K562 (cell line): ENCODE measurements at regions of chr1 and their contacts with region 1.

Region 1: GRCh38 chr1:151773702-151774101 is 10.4 kb upstream of the MRPL9 start:
- DNase-seq: peak in 2 of 4 experiments; percentile 42 to 62
- ATAC-seq: peak; percentile 53; the same call in 2 of the 3 replicates
- H3K4me3 ChIP-seq: no peak overlapping the region
- H3K27ac ChIP-seq: peak overlapping the region; percentile 66; the same call in 2 of the 3 replicates
- H3K4me1 ChIP-seq: peaks cover 21 to 38% of the 10 kb centered on the region in 2 experiments
- H3K27me3 ChIP-seq: no peaks in the 10 kb centered on the region
- CTCF ChIP-seq: no peak
- EP300 ChIP-seq: no peak
- POLR2A ChIP-seq: no peak
- RAD21 ChIP-seq: no peak

Region 2: GRCh38 chr1:151762941-151763921 is 10.5 kb before region 1 on chr1 and contains the start of gene MRPL9:
- CTCF ChIA-PET with region 1: no interaction called
- POLR2A ChIA-PET with region 1: interaction called, 13 read pairs
- in situ Hi-C with region 1: no loop called
- intact Hi-C with region 1: no loop called
- DNase-seq: peak; percentile 88 to 92 (median 91)
- ATAC-seq: peak; percentile 99
- H3K4me3 ChIP-seq: peak within 1 kb of the TSS; percentile 95
- H3K27ac ChIP-seq: peak within 1 kb of the TSS; percentile 88
- H3K4me1 ChIP-seq: peaks cover 3 to 8% of the 10 kb centered on the region in 2 experiments; a peak in 2 of 5 replicates
- H3K27me3 ChIP-seq: no peaks in the 10 kb centered on the region
- CTCF ChIP-seq: no peak; a peak in 1 of 6 replicates
- EP300 ChIP-seq: no peak
- POLR2A ChIP-seq: peak; percentile 87
- RAD21 ChIP-seq: peak; percentile 17 to 36; a peak in 2 of 4 replicates
- polyA plus RNA-seq, gene MRPL9: 38.0 to 57.0 TPM

Region 3: DNA sequence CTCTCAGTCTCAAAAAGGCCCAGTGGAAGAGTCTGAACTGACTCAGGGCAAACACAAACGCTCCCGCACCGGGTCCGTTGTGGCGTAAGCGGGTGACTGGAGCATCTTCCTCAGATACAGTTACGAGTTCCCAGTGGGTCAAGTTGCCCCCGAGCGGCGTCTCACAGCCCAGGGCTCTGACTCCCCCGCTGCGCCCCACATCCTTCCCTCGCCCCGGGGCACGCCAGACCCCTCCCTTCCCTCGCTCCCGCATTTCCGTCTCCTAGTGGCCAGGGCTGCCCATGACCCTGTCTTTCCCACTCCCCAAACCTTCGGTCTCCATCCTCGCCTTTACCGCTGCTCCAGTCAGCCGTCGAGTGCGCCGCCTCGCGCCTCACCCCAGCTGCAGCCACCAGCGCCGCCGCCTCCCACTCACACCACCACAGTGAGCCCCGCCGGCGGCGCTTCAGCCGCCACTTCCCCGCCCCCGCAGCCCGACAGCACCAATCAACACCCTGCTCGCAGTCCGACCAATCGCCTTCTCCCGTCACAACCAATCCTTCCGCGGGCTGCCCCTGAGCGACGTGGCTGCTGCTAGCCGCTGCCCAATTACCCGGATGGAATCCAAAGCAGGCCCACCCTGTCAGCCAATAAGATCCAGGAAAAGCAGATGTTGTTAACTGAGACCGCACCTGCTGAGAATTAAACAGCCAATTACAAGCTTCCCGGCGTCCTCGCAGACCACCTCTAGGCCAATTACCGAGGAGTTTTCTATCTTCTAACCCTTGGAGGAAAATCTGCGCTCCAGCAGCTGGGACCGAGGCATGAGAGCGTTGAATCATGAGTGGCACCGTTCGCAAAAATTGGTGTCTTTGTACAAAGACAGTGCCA is 16.6 kb after region 1 on chr1 and contains the start of gene TDRKH:
- CTCF ChIA-PET with region 1: no interaction called
- POLR2A ChIA-PET with region 1: interaction called, 15 read pairs
- in situ Hi-C with region 1: no loop called
- intact Hi-C with region 1: no loop called
- DNase-seq: peak; percentile 99 to 100 (median 99)
- ATAC-seq: peak; percentile 99
- H3K4me3 ChIP-seq: peak within 1 kb of the TSS; percentile 70
- H3K27ac ChIP-seq: peak within 1 kb of the TSS; percentile 32
- H3K4me1 ChIP-seq: peaks cover 4 to 13% of the 10 kb centered on the region in 2 experiments; a peak in 4 of 5 replicates
- H3K27me3 ChIP-seq: no peaks in the 10 kb centered on the region
- CTCF ChIP-seq: peak; percentile 46 to 60 (median 52)
- EP300 ChIP-seq: no peak
- POLR2A ChIP-seq: peak; percentile 65; the same call in 1 of the 2 replicates
- RAD21 ChIP-seq: peak; percentile 5 to 52; a peak in 2 of 4 replicates
- polyA plus RNA-seq, gene TDRKH: 5.3 to 6.9 TPM

Region 4: GRCh38 chr1:151888972-151889570 is 115.4 kb after region 1 on chr1:
- CTCF ChIA-PET with region 1: no interaction called
- POLR2A ChIA-PET with region 1: no interaction called
- in situ Hi-C with region 1: no loop called
- intact Hi-C with region 1: no loop called
- DNase-seq: no peak
- ATAC-seq: no peak; the same call in 2 of the 3 replicates
- H3K4me3 ChIP-seq: no peak overlapping the region
- H3K27ac ChIP-seq: no peak overlapping the region
- H3K4me1 ChIP-seq: peaks cover 0 to 10% of the 10 kb centered on the region in 2 experiments; a peak in 2 of 5 replicates
- H3K27me3 ChIP-seq: no peaks in the 10 kb centered on the region
- CTCF ChIP-seq: peak in 2 of 3 experiments; percentile 25 to 57; a peak in 2 of 6 replicates
- EP300 ChIP-seq: no peak
- POLR2A ChIP-seq: no peak
- RAD21 ChIP-seq: peak; percentile 56 to 64